ENCODE measurements at regions of chr5 and their contacts with region 1.

Region 1: GRCh38 chr5:116652196-116652729 is 77.6 kb upstream of the SEMA6A start:
- DNase-seq: peak; percentile 70
- H3K4me3 Mint-ChIP-seq: peak overlapping the region; percentile 41
- H3K27ac Mint-ChIP-seq: peak overlapping the region; percentile 8
- H3K4me1 Mint-ChIP-seq: peaks cover 17% of the 10 kb centered on the region
- H3K27me3 Mint-ChIP-seq: no peaks in the 10 kb centered on the region
- CTCF ChIP-seq: no peak

Region 2: GRCh38 chr5:116242343-116242742 is 409.9 kb before region 1 on chr5:
- CTCF ChIA-PET with region 1: no interaction called
- POLR2A ChIA-PET with region 1: no interaction called
- intact Hi-C with region 1: no loop called
- DNase-seq: no peak
- H3K4me3 Mint-ChIP-seq: no peak overlapping the region
- H3K27ac Mint-ChIP-seq: no peak overlapping the region
- H3K4me1 Mint-ChIP-seq: no peaks in the 10 kb centered on the region
- H3K27me3 Mint-ChIP-seq: no peaks in the 10 kb centered on the region
- CTCF ChIP-seq: no peak

Region 3: DNA sequence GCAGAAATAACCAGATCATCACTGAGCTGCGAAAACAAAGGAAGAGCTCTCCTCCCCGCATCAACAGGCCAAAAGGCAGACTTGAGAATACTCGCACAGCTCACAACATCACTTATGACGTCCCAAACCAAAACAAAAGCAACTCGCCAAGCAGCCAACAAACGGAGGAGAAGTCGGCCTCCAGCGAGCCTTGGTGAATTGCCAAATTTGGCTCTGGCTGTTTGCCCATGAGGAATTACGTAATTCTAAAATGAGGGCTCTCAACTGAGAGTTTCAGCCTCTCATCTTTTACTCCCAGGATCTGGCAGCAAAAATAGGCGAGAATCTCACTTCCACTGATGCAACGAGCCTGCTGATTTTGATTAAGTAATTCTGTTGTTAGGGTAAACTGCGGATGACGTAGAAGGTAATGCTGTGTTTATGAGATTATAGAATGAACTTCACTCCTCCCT is 26.0 kb before region 1 on chr5:
- CTCF ChIA-PET with region 1: interaction called, 3 read pairs
- POLR2A ChIA-PET with region 1: interaction called, 8 read pairs
- intact Hi-C with region 1: loop called (anchors 1 kb)
- DNase-seq: peak; percentile 91
- H3K4me3 Mint-ChIP-seq: peak overlapping the region; percentile 3
- H3K27ac Mint-ChIP-seq: peak overlapping the region; percentile 13
- H3K4me1 Mint-ChIP-seq: peaks cover 9% of the 10 kb centered on the region
- H3K27me3 Mint-ChIP-seq: no peaks in the 10 kb centered on the region
- CTCF ChIP-seq: no peak

Region 4: DNA sequence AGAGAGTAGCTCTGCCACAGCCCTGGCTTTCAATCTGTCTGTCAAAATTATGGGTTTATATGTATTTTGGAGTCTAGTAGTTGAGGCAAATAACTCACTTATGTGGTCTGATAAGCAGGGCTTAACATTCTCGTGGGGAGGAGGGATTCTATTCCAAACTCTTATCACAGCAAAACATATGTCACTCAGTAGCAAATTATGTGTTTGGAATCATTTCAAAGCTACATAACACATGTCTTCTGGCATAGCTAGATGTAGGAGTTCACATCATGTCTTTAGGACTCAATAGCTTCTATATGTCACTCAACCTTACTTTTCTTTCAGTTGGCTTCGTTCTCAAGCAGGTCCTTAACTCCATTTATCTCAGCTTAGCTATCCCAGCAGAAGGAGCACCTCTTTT is 66.8 kb after region 1 on chr5:
- CTCF ChIA-PET with region 1: no interaction called
- POLR2A ChIA-PET with region 1: no interaction called
- intact Hi-C with region 1: no loop called
- DNase-seq: no peak
- H3K4me3 Mint-ChIP-seq: no peak overlapping the region
- H3K27ac Mint-ChIP-seq: no peak overlapping the region
- H3K4me1 Mint-ChIP-seq: no peaks in the 10 kb centered on the region
- H3K27me3 Mint-ChIP-seq: no peaks in the 10 kb centered on the region
- CTCF ChIP-seq: no peak

Region 5: GRCh38 chr5:116922532-116922931 is 270.3 kb after region 1 on chr5:
- CTCF ChIA-PET with region 1: no interaction called
- POLR2A ChIA-PET with region 1: no interaction called
- intact Hi-C with region 1: no loop called
- DNase-seq: no peak
- H3K4me3 Mint-ChIP-seq: no peak overlapping the region
- H3K27ac Mint-ChIP-seq: no peak overlapping the region
- H3K4me1 Mint-ChIP-seq: no peaks in the 10 kb centered on the region
- H3K27me3 Mint-ChIP-seq: no peaks in the 10 kb centered on the region
- CTCF ChIP-seq: no peak